Right ventricle myocardium superior (tissue), 1 donor: ENCODE measurements at regions of chr11 and their contacts with region 1.

Region 1: DNA sequence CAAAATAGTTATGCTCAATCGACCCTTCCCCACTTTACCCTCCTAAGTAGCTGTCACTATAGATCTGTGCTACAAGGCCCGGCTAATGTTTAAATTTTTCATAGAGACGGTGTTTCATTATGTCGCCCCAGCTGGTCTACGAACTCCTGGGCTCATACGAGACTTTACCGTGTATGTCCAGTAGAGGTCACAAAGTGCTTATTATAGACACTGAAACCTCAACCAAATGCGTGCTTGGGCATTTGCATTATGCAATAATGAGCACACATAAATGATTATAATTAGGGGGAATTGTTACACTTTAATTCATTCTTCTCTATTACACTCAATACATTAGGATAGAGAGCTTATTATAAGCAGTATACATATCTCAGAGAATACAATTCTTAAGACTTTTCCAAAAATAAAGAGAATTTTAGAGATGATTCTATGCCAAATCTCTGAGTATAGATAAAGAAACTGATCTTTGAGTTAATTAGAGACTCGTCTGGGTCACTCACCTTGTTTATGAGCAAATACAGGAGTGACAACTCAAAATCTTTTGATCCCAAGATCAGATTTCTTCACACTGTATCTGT is 12.5 kb upstream of the MRPL16 start:
- DNase-seq: no peak
- ATAC-seq: peak; percentile 82

Region 2: GRCh38 chr11:59706518-59707285 is 116.4 kb before region 1 on chr11:
- intact Hi-C with region 1: no loop called
- DNase-seq: no peak
- ATAC-seq: no peak

Region 3: GRCh38 chr11:60193687-60194433 is 370.8 kb after region 1 on chr11:
- intact Hi-C with region 1: loop called (anchors 10 kb)
- DNase-seq: no peak
- ATAC-seq: peak; percentile 69